ENCODE measurements at regions of chr10 and their contacts with region 1.

Region 1: GRCh38 chr10:132643709-132644526 is 106.3 kb downstream of the INPP5A start:
- DNase-seq: no peak
- H3K4me3 ChIP-seq: no peak overlapping the region
- H3K27ac ChIP-seq: no peak overlapping the region
- H3K4me1 ChIP-seq: peaks cover 6% of the 10 kb centered on the region
- H3K27me3 ChIP-seq: no peaks in the 10 kb centered on the region
- CTCF ChIP-seq: no peak

Region 2: DNA sequence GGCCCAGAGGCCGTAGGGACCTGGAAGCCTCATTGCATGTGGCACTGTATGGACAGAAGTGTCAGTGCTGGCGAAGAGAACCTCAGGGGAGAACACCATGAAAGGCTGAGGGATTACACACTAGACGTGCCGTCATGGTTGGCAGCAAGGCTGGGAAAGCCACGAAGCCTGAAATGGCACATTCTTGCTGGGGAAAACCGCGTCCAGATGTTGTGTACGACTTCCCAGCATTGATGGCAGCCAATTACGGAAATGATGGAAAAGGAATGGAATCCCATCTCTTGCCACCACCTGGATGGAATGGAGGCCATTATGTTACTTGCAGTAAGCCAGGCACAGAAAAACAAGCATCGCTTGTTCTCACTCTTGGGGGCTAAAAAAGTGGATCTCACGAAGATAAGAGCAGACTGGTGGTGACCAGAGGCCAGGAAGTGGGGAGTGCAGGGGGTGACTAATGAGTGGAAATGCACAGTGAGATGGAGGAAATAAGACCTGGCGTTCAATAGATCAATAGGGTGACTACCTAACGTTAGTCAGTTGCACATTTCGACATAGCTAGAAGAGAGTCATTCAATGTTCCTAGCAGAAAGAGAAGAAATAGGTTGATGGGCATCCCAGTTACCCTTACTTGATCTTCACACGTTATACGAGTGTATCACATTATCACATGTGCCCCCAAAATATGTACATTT is 261.5 kb before region 1 on chr10:
- intact Hi-C with region 1: loop called (anchors 5 kb)
- DNase-seq: no peak
- H3K4me3 ChIP-seq: no peak overlapping the region
- H3K27ac ChIP-seq: no peak overlapping the region
- H3K4me1 ChIP-seq: no peaks in the 10 kb centered on the region
- H3K27me3 ChIP-seq: no peaks in the 10 kb centered on the region
- CTCF ChIP-seq: no peak

Region 3: GRCh38 chr10:132826524-132827422 is 182.9 kb after region 1 on chr10:
- intact Hi-C with region 1: no loop called
- DNase-seq: no peak
- H3K4me3 ChIP-seq: no peak overlapping the region
- H3K27ac ChIP-seq: no peak overlapping the region
- H3K4me1 ChIP-seq: no peaks in the 10 kb centered on the region
- H3K27me3 ChIP-seq: no peaks in the 10 kb centered on the region
- CTCF ChIP-seq: no peak